ENCODE measurements at regions of chr22 and their contacts with region 1.

Region 1: DNA sequence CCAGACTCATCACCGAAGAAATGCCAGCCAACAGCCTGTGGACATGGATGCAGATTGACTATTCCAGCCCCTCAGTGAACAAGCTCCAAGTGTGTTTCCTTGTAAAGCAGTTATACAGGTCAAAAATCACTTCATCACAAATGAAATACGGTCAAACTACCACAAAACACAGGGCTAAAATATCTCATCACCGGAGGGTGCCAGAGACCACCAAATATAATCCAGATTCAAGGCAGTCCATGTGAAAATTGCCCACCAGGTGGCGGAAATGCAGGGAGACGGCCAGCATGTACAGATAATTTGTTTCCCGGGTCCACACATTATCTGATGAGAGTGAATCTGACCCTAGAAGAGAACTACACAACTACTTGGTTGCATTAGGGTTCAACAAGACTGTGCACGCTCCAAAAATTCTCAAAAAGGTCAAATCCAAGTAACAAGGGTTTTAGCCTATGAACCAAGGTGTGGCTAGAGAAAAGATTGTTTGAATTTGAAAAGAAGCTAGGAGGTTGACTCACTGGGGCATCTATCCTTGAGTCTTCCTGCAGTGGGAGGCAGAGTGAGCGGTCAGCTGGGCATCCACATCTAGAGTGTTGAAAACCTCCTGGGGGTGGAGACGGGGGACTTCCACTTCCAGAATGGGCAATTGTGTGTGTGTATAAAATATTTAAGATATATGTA is 71.7 kb downstream of the IGLL5 start:
- DNase-seq: peak; percentile 88
- H3K4me3 Mint-ChIP-seq: no peak overlapping the region
- H3K27ac Mint-ChIP-seq: no peak overlapping the region
- H3K4me1 Mint-ChIP-seq: peaks cover 2% of the 10 kb centered on the region
- H3K27me3 Mint-ChIP-seq: peaks cover 15% of the 10 kb centered on the region

Region 2: DNA sequence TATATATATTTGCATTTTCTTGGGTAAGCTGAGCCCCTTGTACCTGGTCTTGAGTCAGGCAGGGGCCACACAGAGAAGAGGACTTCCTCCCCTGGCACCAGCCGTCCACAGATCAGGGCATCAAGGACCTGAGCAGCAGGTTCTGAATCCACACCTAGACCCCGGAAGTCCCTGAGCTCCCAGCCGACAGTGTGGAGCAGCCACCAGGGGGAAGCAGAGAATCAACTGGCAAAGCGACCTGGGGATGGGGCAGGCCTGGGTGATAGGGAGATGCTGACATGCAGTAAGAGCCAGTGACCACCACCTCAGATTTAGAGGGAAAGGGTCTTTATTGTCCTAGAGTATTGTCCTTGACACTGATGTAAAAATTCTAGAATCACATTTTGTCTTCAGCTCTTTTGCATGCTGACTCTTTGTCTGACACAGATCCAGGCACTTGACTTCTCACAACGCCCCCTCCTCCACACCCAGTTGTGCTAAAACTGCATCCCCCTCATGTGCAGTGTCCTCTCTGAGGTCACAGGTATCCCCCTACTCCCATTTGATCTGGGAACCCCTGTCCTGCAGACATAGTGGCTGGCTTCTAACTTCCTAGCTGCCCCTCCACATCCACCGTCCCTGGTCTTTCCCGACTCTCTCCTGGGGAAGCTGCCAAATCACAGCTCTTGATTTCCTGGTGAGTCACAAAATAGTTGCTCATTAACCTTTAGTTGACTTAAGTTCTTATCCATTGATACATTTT is 205.6 kb before region 1 on chr22:
- CTCF ChIA-PET with region 1: interaction called, 12 read pairs
- intact Hi-C with region 1: loop called (anchors 1 kb)
- DNase-seq: peak; percentile 87
- H3K4me3 Mint-ChIP-seq: no peak overlapping the region
- H3K27ac Mint-ChIP-seq: no peak overlapping the region
- H3K4me1 Mint-ChIP-seq: peaks cover 19% of the 10 kb centered on the region
- H3K27me3 Mint-ChIP-seq: no peaks in the 10 kb centered on the region

Region 3: DNA sequence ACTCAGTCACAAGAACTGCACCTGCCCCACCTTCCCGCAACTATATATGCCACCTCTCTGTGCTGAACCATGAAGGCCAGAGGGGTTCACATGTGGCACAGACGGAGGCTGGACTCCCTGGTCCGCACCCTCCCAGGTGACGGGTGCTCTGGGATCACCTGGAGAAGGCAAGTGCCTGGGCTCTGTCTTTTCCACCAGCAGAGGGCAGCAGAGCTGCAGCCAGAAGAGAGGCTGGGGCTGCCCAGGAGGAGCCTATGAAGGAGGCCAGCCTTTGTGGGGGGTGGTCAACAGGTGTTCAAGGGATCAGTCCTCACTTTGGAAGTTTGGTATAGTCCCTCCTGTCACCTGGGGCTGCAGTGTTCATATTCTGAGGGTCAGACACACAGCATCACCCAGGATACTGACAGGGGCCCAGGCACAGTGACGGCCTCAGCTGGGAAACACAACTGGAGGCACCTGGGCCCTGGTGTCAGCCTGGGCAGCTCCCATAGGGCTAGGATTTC is 110.9 kb before region 1 on chr22:
- CTCF ChIA-PET with region 1: interaction called, 73 read pairs
- intact Hi-C with region 1: loop called (anchors 1 kb)
- DNase-seq: peak; percentile 84
- H3K4me3 Mint-ChIP-seq: no peak overlapping the region
- H3K27ac Mint-ChIP-seq: no peak overlapping the region
- H3K4me1 Mint-ChIP-seq: peaks cover 31% of the 10 kb centered on the region
- H3K27me3 Mint-ChIP-seq: no peaks in the 10 kb centered on the region

Region 4: DNA sequence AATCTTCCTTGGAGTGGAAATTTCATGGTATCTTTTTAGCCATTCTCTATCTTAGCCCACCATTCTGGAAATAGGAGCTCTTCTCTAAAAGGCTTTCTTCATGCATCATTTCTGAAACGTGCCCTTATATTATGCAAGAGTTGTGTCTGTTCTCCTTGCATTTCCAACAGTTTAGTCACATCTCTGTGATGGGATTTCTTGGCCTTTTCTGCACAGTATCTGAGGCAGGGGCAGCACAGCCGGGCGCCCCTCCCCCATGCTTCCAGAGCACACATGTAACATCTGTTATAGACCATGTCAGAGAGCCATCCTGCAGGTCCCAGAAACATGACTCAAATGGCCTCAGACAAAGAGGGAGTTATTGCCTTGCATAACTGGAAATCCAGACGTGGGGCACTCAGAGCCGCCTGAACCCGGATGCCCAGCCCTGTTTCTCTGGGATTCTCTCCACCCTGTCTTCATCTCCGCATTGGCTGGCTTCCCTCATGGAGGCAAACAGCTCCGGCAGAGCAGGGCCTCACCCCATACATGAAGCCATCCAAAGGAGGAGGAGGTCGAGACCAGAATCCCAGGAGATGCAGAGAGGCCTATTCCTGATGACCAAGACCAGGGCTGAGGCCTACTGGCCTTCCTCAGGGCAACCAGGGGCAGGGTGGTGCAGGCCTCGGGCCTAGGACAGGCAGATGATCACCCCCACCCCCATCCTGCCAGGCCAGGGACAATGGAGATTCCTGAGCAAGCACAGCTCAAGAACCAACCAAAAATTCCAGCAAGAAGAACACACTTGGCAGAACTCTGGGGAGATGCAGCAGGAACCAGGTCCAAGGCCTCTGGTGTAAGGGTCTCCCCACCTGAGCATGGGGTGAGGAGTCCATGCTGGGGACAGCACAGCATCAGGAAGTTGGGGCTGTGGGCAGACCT is 10.4 kb before region 1 on chr22:
- CTCF ChIA-PET with region 1: interaction called, 45 read pairs
- intact Hi-C with region 1: no loop called
- DNase-seq: no peak
- H3K4me3 Mint-ChIP-seq: no peak overlapping the region
- H3K27ac Mint-ChIP-seq: no peak overlapping the region
- H3K4me1 Mint-ChIP-seq: no peaks in the 10 kb centered on the region
- H3K27me3 Mint-ChIP-seq: peaks cover 20% of the 10 kb centered on the region

Region 5: GRCh38 chr22:23119494-23120414 is 160.5 kb after region 1 on chr22:
- CTCF ChIA-PET with region 1: interaction called, 25 read pairs
- intact Hi-C with region 1: no loop called
- DNase-seq: peak; percentile 84
- H3K4me3 Mint-ChIP-seq: peak overlapping the region; percentile 71
- H3K27ac Mint-ChIP-seq: peak overlapping the region; percentile 86
- H3K4me1 Mint-ChIP-seq: peaks cover 14% of the 10 kb centered on the region
- H3K27me3 Mint-ChIP-seq: no peaks in the 10 kb centered on the region

Region 6: DNA sequence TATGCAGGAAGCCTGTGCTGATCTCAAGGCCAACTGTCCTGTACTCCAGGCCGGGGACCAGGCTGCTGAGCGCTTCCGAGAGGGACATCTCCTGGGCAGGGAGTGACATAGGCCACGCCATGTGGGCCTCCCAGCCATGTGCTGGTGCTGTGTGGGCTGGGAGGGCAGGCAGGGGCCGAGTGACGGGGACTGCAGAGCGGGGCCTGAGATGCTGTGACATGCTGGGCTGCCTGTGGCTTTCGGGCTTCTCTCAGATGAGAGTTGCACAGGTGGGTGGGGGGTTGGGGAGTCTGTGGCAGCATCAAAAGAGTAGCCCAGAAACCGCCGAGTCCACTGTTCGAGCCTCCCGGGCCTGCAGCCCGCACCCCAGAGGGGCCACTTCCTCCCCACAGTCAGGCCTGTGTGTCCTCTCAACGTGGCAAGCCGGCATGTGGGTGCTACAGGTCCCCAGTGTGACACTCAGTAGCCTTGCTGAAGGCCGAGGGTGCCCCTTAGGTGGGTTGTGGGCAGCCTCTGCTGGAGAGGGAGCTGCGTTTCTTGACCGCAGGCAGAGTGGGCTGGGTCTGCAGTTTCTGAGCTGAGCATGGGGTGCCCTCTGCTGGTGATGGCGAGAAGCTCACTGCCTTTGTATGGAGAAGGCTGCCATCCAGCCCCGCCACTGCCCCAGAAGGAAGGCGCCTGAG is 322.3 kb after region 1 on chr22:
- CTCF ChIA-PET with region 1: interaction called, 4 read pairs
- intact Hi-C with region 1: loop called (anchors 10 kb)
- DNase-seq: peak; percentile 91
- H3K4me3 Mint-ChIP-seq: no peak overlapping the region
- H3K27ac Mint-ChIP-seq: no peak overlapping the region
- H3K4me1 Mint-ChIP-seq: peaks cover 20% of the 10 kb centered on the region
- H3K27me3 Mint-ChIP-seq: no peaks in the 10 kb centered on the region

Measured in activated naive CD4-positive, alpha-beta T cell treated with anti-CD3 and anti-CD28 coated beads for 36 hours (primary cell).